ENCODE measurements at regions of chrX and their contacts with region 1.

Region 1: DNA sequence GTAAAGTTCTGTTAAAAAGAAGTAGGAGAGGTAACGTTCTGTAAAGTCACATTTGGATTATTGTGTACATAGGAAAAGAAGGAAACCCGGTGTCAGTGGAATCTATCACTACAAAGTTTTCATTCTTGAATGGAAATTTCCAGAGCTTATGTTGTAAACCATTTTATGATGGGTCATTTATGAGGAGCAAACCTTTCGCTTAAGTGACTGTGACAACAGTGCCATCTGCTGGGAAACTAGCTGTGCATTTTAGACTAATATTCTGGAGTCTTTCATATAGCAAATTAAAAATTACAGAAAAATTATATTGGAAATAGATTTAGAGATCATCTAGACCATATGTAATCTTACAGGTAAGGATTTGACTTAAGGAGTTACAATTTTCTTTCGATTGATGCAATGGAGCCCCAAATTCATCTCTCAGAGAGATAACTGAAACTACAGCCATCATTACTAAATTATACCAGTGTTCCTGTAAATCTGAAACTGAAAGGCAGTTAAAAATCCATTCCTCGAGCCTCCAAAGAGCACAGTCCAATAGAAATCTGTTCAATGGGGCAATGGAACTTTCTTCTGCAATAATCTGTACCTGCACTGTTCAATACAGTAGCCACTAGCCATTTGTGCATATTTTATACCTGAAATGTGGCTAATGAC is 26.9 kb downstream of the ASB9 start:
- DNase-seq: peak; percentile 55
- H3K4me3 ChIP-seq: no peak overlapping the region
- H3K27ac ChIP-seq: no peak overlapping the region
- H3K4me1 ChIP-seq: no peaks in the 10 kb centered on the region
- H3K27me3 ChIP-seq: no peaks in the 10 kb centered on the region
- CTCF ChIP-seq: peak; percentile 9 to 23
- POLR2A ChIP-seq: no peak

Region 2: DNA sequence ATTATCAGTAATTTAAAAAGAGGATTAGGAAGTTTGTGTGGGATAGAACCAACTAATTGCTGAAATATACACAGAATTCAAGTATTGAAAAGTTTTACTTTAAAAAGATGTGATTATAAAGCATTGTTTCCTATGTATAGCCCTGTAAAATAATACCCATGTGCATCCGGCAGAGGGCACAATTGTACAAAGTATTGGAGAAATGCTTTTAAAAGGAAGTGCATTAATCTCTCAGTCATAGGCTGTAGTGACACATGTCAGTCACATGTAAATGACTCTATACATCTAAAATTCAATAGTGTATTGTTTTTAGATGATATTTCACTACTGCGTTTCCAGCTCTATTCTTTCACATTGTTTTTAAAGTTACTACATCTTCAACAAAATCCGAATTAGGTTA is 1203.7 kb before region 1 on chrX:
- CTCF ChIA-PET with region 1: interaction called, 15 read pairs
- POLR2A ChIA-PET with region 1: no interaction called
- dilution Hi-C with region 1: no loop called
- intact Hi-C with region 1: loop called (anchors 1 kb)
- DNase-seq: peak; percentile 46
- H3K4me3 ChIP-seq: no peak overlapping the region
- H3K27ac ChIP-seq: no peak overlapping the region
- H3K4me1 ChIP-seq: no peaks in the 10 kb centered on the region
- H3K27me3 ChIP-seq: no peaks in the 10 kb centered on the region
- CTCF ChIP-seq: peak; percentile 23 to 31
- POLR2A ChIP-seq: no peak

Region 3: GRCh38 chrX:14095702-14096101 is 1147.3 kb before region 1 on chrX:
- CTCF ChIA-PET with region 1: interaction called, 13 read pairs
- POLR2A ChIA-PET with region 1: no interaction called
- dilution Hi-C with region 1: no loop called
- intact Hi-C with region 1: loop called (anchors 1 kb)
- DNase-seq: peak; percentile 47
- H3K4me3 ChIP-seq: no peak overlapping the region
- H3K27ac ChIP-seq: no peak overlapping the region
- H3K4me1 ChIP-seq: no peaks in the 10 kb centered on the region
- H3K27me3 ChIP-seq: no peaks in the 10 kb centered on the region
- CTCF ChIP-seq: peak; percentile 47 to 59
- POLR2A ChIP-seq: no peak

Region 4: DNA sequence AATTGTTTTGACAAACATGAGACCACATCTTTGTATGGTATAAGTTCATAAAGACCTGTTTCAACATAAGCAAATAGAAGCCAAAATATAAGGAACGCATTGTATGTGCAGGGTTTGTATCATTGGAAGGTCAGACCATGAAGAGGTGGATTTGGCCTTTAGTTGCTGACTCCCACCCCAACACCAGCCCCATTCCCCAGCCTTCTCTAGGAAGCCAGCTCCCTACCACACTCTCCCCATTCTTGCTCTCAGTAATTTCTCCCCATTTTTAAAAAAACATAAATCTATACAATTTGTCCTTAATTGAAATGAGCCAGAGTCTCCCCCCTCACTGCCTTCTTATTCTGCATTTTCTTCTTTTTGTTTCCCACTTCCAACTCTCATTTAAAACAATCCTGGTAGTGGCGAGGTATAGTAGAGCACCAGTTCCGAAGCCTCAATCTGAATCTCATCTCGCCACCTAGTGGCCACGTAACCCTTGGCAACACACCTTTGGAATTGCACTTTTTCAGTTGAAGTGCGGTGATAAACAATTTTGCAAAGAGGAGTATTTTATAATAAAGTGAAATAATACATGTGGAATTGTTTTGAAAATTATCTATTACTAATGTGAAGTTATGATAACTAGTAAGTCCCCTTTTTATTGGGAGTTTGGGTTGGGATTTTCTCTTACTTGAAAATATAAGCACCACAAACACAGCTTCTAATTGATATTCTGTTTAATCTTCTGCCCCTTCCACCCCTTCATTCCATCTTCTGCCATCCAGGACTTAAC is 99.8 kb before region 1 on chrX:
- CTCF ChIA-PET with region 1: interaction called, 6 read pairs
- POLR2A ChIA-PET with region 1: no interaction called
- dilution Hi-C with region 1: no loop called
- intact Hi-C with region 1: loop called (anchors 2 kb)
- DNase-seq: peak; percentile 18
- H3K4me3 ChIP-seq: no peak overlapping the region
- H3K27ac ChIP-seq: no peak overlapping the region
- H3K4me1 ChIP-seq: no peaks in the 10 kb centered on the region
- H3K27me3 ChIP-seq: peaks cover 0 to 5% of the 10 kb centered on the region in 2 experiments
- CTCF ChIP-seq: peak; percentile 38 to 54
- POLR2A ChIP-seq: no peak

Region 5: DNA sequence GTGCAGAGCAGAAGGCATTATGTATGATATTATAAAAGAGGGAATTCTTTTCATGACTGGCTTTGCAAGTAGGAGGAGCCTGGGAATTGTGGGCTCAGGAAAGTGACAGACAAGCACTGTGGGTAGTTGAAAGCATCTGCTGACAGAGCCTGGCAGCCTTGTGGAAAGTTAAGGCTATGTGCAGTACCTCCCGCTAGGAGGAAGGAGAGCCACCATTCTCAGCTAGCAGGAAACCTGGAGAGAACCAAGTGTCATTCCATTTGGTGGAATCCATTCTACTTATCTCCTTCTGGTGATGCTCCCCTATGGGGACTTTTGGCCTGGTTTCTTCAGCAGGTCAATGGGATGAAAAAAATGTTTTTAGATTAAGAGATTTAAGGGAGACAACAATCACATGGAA is 55.0 kb before region 1 on chrX:
- CTCF ChIA-PET with region 1: no interaction called
- POLR2A ChIA-PET with region 1: no interaction called
- dilution Hi-C with region 1: no loop called
- intact Hi-C with region 1: no loop called
- DNase-seq: no peak
- H3K4me3 ChIP-seq: no peak overlapping the region
- H3K27ac ChIP-seq: no peak overlapping the region
- H3K4me1 ChIP-seq: no peaks in the 10 kb centered on the region
- H3K27me3 ChIP-seq: no peaks in the 10 kb centered on the region
- CTCF ChIP-seq: no peak
- POLR2A ChIP-seq: no peak

Region 6: GRCh38 chrX:15207384-15207783 is 35.6 kb before region 1 on chrX:
- CTCF ChIA-PET with region 1: interaction called, 3 read pairs
- POLR2A ChIA-PET with region 1: no interaction called
- dilution Hi-C with region 1: no loop called
- intact Hi-C with region 1: loop called (anchors 1 kb)
- DNase-seq: no peak
- H3K4me3 ChIP-seq: no peak overlapping the region
- H3K27ac ChIP-seq: no peak overlapping the region
- H3K4me1 ChIP-seq: no peaks in the 10 kb centered on the region
- H3K27me3 ChIP-seq: no peaks in the 10 kb centered on the region
- CTCF ChIP-seq: no peak
- POLR2A ChIP-seq: no peak

Measured in endothelial cell of umbilical vein (primary cell).